ENCODE measurements at regions of chr1 and their contacts with region 1.

Region 1: DNA sequence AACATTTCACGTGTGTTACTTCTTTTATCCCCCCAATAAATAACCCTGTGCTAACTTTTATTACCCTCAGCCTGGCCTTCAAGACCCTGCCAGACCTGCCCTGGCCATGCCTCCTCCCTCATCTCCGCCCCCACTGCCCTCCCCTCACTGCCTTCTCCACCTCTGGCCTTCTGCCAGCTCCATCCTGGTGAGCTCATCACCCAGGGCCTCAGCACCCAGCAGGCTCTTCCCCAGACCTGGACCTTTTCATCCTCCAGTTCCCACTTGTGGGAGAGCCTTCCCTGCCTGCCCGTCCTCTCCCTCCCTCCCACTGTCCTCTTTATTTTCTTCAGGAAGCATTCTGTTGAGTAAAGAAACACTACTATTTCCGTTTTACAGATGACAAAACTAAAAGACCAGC is 72.0 kb downstream of the SLC66A1 start:
- DNase-seq: peak; percentile 53
- ATAC-seq: no peak

Region 2: GRCh38 chr1:19582302-19582701 is 198.2 kb after region 1 on chr1:
- intact Hi-C with region 1: loop called (anchors 10 kb)
- DNase-seq: peak; percentile 60
- ATAC-seq: peak; percentile 45

Measured in Right ventricle myocardium superior (tissue), 1 donor.